SK-N-SH (cell line): ENCODE measurements at regions of chr12 and their contacts with region 1.

Region 1: DNA sequence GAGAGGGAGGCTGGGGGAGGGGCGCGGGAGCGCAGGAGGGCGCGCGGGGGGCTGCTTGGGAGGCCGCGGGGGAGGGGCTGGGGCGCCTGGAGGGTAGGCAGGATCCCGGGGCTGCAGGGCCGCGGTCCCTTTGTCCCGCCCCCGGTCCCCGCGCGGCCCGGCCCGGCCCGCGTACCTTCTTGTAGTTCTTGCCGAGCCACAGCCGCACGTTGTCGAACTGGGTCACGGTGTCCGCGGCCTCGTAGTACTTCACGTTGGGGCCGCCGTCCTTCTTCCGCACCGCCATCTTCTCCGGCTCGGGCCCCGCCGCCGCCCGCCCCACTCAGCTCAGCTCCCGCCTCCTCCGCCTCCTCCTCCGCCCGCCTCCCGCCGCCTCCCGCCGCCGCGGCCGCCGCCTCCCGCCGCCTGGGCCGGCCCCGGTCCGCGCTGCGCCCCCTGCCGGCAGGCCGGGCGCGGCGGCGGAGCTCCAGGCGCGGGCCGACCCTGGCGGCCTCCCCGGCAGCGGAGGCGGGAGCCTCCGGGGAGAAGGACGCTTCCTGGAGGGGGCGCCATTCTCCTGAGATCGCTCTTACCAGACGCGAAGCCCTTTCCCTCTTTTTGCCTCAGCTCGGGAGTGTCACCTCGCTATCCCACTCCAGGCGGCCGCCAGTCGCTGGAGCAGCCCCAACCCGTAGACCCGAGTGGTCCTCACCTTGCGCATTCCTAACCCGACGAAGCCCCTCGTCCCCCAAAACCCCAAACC is at the start of gene SMARCC2:
- DNase-seq: peak; percentile 97
- H3K4me3 ChIP-seq: peak within 1 kb of the TSS; percentile 87 to 91
- H3K27ac ChIP-seq: peak within 1 kb of the TSS; percentile 83 to 87
- H3K4me1 ChIP-seq: peaks cover 8 to 13% of the 10 kb centered on the region in 2 experiments; a peak in 2 of 4 replicates
- H3K27me3 ChIP-seq: no peaks in the 10 kb centered on the region
- CTCF ChIP-seq: peak; percentile 70
- EP300 ChIP-seq: no peak
- RAD21 ChIP-seq: peak; percentile 50
- polyA plus RNA-seq, gene SMARCC2: 64.3 and 73.0 TPM in 2 replicates

Region 2: DNA sequence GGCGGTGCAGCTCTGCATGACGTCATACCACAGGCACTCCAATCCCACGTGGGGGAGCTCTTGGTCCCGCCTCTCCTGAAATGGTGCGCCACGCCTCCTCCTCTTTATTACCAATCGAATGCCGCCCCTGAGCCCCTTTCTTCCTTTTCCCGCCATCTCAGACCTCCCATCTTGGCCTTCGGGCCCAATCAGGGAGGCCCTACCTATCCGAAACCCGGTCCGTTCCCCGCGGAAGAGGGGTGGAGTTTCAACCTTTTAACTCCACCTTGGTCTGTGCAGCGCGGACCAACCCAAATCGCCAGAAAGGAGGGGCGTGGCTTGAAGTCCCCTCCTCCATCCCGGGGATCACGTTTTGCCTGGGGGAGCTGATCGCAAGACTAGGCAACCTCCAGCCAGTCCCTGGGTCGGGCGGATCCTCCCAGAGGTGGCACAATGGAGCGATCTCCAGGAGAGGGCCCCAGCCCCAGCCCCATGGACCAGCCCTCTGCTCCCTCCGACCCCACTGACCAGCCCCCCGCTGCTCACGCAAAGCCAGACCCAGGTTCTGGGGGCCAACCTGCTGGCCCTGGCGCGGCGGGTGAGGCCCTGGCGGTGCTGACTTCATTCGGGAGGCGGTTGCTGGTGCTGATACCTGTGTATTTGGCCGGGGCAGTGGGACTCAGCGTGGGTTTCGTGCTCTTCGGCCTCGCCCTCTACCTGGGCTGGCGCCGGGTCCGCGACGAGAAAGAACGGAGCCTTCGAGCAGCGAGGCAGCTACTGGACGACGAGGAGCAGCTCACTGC is 61.3 kb before region 1 on chr12 and contains the start of gene ESYT1:
- CTCF ChIA-PET with region 1: interaction called, 272 read pairs
- POLR2A ChIA-PET with region 1: interaction called, 11 read pairs
- DNase-seq: peak; percentile 94
- H3K4me3 ChIP-seq: peak within 1 kb of the TSS; percentile 67 to 89
- H3K27ac ChIP-seq: peak within 1 kb of the TSS; percentile 85 to 88
- H3K4me1 ChIP-seq: peaks cover 13 to 23% of the 10 kb centered on the region in 2 experiments
- H3K27me3 ChIP-seq: no peaks in the 10 kb centered on the region
- CTCF ChIP-seq: no peak; the same call in 1 of the 2 replicates
- EP300 ChIP-seq: no peak
- RAD21 ChIP-seq: no peak
- polyA plus RNA-seq, gene ESYT1: 132 and 143 TPM in 2 replicates

Region 3: DNA sequence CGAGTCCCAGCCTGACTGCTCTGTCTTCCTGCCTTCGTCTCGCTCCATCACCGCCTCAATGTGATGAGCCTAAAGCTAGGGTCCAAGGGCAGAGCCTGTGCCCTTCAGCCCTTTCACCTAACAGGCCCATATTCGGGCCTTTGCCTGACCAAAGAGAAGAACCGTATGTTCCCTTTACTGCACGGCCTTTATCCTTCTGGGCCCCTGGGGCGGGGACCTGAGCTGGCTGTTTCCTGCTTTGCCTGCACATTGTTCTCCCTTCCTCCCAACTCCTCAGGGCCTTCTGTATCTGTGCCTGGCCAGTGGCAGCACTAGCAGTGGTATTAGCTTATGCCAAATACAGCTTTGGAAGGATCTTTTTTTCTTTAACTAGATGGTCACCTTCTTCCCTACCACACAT is 45.5 kb before region 1 on chr12:
- CTCF ChIA-PET with region 1: interaction called, 16 read pairs
- POLR2A ChIA-PET with region 1: no interaction called
- DNase-seq: no peak
- H3K4me3 ChIP-seq: no peak overlapping the region
- H3K27ac ChIP-seq: no peak overlapping the region
- H3K4me1 ChIP-seq: peaks cover 0 to 2% of the 10 kb centered on the region in 2 experiments; a peak in 1 of 4 replicates
- H3K27me3 ChIP-seq: no peaks in the 10 kb centered on the region
- CTCF ChIP-seq: no peak
- EP300 ChIP-seq: no peak
- RAD21 ChIP-seq: no peak

Region 4: DNA sequence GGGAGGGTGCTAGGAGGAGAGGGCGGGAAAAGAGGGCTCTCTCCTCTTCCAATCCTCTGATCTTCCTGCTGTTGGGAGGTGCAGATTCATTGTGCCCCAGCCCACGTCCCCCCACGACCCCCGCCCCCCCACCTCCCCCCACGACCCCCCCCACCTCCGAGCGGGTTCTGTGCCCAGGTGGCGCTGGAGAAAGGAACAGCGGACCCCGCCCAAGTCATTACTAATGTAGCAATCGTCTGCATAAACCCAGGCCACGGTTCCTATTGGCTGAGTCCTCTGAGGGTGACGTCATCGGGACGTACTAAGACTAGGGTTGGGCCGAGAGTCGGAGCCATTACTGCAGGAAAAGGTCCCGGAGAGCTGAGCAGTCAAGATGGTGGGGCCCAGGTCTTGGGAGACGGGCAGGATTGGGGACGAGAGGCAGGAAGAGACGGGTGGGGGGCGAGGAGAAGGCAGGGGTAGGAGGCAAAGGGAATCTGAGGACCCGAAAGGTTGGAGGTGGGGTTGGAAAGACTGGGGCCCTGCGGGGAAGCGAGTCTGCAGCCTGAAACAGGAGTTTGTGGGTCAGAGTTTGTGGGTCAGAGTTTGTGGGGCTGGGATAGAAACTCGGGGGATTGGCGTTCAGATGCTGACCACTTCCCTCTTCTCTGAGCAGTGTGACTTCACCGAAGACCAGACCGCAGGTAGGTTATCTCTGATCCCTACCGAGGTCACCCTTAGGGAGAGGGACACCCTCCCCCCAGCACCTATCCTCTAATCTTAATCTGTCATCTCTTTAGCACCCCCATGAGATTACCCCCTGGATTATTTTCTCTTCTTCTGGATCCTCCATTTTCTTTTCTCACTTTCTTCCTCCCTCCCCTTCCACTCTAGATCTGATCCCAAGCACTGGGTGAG is 31.1 kb before region 1 on chr12 and contains the start of gene MYL6:
- CTCF ChIA-PET with region 1: interaction called, 60 read pairs
- POLR2A ChIA-PET with region 1: interaction called, 10 read pairs
- DNase-seq: peak; percentile 90
- H3K4me3 ChIP-seq: peak within 1 kb of the TSS; percentile 82 to 87
- H3K27ac ChIP-seq: peak within 1 kb of the TSS; percentile 82 to 89
- H3K4me1 ChIP-seq: peaks cover 30 to 39% of the 10 kb centered on the region in 2 experiments; a peak in 3 of 4 replicates
- H3K27me3 ChIP-seq: no peaks in the 10 kb centered on the region
- CTCF ChIP-seq: no peak
- EP300 ChIP-seq: no peak
- RAD21 ChIP-seq: no peak
- polyA plus RNA-seq, gene MYL6: 4,697 and 4,711 TPM in 2 replicates

Region 5: GRCh38 chr12:56206457-56207166 is 17.3 kb after region 1 on chr12:
- CTCF ChIA-PET with region 1: interaction called, 123 read pairs
- POLR2A ChIA-PET with region 1: no interaction called
- DNase-seq: peak; percentile 67
- H3K4me3 ChIP-seq: no peak overlapping the region
- H3K27ac ChIP-seq: peak overlapping the region in 1 of 2 experiments; percentile 29; a peak in 1 of 4 replicates
- H3K4me1 ChIP-seq: no peaks in the 10 kb centered on the region; a peak in 1 of 4 replicates
- H3K27me3 ChIP-seq: no peaks in the 10 kb centered on the region
- CTCF ChIP-seq: peak; percentile 66
- EP300 ChIP-seq: no peak
- RAD21 ChIP-seq: peak; percentile 61

Region 6: DNA sequence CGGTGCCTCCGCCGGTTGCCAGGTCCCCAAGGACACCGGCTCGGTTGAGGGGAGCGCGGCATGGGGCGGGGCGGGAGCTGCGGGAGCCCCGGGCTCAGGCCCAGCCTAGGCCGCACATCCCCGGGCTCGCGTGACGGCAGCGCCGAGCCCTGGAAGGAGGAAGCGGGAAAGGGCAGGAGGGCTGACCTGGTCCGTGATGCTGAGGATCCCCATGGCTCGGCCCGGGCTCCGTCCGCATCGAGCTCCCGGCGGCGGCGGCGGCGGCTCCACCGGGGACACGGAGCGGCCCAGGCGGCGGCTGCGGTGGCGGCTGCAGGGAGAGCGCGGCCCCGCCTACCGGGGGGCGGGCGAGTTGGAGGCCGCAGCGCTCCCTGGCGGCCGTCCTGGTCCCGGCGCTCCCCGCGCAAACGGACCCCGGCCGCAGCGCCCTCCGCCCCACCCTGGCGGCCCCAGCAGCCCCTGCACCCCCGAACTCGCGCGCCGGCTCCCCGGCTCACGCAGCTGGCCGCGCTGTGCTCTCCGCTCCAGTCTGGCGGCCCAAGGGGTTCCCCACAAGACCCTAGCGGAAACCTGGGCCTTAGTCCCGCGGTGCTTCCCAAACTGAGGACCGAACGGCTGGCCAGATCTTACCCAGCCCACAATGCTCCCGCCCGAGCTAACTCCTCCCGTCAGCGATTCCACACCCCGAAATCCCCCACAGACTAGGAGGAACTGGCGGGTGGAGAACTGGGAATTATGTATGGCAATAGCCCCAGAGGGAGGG is 68.9 kb after region 1 on chr12 and contains the start of gene ANKRD52:
- CTCF ChIA-PET with region 1: interaction called, 58 read pairs
- POLR2A ChIA-PET with region 1: interaction called, 4 read pairs
- DNase-seq: peak; percentile 98
- H3K4me3 ChIP-seq: peak within 1 kb of the TSS; percentile 90 to 95
- H3K27ac ChIP-seq: peak within 1 kb of the TSS; percentile 75 to 92
- H3K4me1 ChIP-seq: peaks cover 15 to 19% of the 10 kb centered on the region in 2 experiments
- H3K27me3 ChIP-seq: no peaks in the 10 kb centered on the region
- CTCF ChIP-seq: peak; percentile 68
- EP300 ChIP-seq: no peak; a peak in 1 of 4 replicates
- RAD21 ChIP-seq: peak; percentile 8; the same call in 1 of the 2 replicates
- polyA plus RNA-seq, gene ANKRD52: 22.5 and 23.4 TPM in 2 replicates

Region 7: DNA sequence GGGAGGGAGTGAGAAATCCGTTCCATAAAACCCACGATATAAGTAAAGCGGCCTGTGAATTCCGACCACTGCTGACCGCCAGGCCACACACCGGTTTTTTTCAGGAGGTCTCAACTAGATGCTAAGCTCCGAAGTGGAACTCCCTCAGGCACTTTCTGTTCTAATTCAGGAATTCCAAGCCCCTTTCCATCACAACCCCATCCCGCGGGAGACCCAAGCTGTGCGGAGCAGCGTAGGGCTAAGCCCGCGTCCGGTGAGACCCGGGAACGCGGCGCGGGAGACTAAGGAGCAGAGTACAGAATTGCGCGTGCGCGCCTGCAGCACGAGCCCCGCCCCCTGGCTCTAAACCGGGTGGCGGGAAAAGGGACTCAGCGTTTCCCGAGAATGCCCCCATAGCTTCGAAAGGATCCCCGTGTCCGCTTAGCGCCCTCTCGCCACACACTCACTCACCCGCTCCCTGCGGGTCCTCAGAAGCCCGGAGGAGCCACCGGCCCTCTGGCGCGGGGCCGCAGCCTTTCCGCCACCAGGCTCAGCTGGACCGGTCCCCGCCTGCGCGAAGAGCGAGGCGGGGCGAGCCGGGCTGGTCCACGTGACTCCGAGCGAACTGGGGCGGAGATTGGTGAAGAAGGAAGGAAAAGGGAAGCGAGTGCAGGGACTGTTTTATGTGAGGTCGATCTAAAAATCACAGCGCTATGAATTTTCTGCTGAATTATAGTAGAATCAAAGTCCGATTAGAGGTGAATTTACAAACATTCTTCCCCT is 259.7 kb after region 1 on chr12 and contains the start of gene TIMELESS:
- CTCF ChIA-PET with region 1: interaction called, 11 read pairs
- POLR2A ChIA-PET with region 1: interaction called, 3 read pairs
- DNase-seq: peak; percentile 95
- H3K4me3 ChIP-seq: peak within 1 kb of the TSS; percentile 68 to 75
- H3K27ac ChIP-seq: peak within 1 kb of the TSS; percentile 72 to 91
- H3K4me1 ChIP-seq: peaks cover 3 to 8% of the 10 kb centered on the region in 2 experiments; a peak in 3 of 4 replicates
- H3K27me3 ChIP-seq: no peaks in the 10 kb centered on the region
- CTCF ChIP-seq: no peak
- EP300 ChIP-seq: no peak
- RAD21 ChIP-seq: no peak
- polyA plus RNA-seq, gene TIMELESS: 5.1 and 5.4 TPM in 2 replicates